Mammary epithelial cell (primary cell): ENCODE measurements at regions of chr2 and their contacts with region 1.

Region 1: DNA sequence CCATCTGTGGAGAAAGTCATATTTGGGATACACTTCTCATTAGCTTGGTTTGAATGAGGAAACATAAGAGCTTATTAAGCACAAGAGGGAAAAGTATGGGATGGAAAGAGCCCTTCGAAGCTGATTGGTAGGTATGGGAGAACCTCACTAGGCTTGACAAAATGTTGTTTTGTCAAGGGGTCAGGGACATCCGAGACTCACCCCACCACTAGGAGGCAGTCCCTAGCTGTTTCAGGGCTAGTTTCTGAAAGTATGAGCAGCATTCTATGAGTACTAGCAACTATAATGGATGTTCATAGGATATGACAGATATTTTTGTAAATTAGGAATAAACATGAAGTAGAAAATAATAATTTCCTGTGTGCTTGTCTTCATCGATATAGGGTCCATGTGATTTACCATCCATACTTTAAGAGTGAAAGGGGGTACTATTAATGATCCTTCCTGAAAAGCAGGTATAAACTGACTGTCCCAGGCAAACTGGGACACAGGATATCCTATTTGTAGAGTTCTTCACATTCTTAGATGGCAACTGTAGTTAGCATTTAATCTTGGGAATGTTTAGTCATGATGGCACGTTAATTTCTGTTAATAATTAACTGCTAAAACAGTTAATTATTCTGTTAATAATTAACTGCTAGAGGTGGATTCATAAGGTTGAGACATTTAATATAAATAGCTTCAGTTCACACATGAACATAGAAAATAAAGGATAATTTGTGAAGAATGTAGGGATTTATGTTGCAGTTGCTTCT is 28.4 kb downstream of the OTX1 start:
- DNase-seq: peak; percentile 42
- H3K4me3 ChIP-seq: no peak overlapping the region
- H3K27ac ChIP-seq: no peak overlapping the region
- H3K4me1 ChIP-seq: no peaks in the 10 kb centered on the region
- H3K27me3 ChIP-seq: no peaks in the 10 kb centered on the region
- CTCF ChIP-seq: peak; percentile 68 to 86

Region 2: DNA sequence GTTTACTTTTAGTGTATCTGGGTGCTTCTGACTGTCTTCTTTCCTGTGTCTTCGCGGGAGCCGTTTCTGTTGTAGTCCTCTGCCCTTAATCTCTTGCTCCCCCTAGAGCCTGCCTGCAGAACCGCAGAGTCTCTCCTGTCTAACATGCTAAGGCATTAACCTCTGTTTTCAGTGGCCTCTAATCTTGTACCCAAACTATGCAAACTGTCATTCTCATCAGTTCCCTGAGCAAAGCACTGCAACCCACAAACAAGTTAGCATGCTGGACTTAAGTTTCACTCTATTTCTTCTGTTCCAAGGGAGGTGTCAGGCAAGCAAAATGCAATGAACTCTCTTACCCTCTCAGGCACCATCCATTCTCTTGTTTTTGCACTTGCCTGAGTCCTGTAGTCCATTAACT is 110.0 kb after region 1 on chr2:
- CTCF ChIA-PET with region 1: no interaction called
- dilution Hi-C with region 1: no loop called
- in situ Hi-C with region 1: no loop called
- intact Hi-C with region 1: loop called (anchors 1 kb)
- DNase-seq: peak; percentile 41
- H3K4me3 ChIP-seq: no peak overlapping the region
- H3K27ac ChIP-seq: no peak overlapping the region
- H3K4me1 ChIP-seq: no peaks in the 10 kb centered on the region
- H3K27me3 ChIP-seq: no peaks in the 10 kb centered on the region
- CTCF ChIP-seq: peak; percentile 95 to 97

Region 3: GRCh38 chr2:63424329-63425078 is 345.5 kb after region 1 on chr2:
- CTCF ChIA-PET with region 1: no interaction called
- dilution Hi-C with region 1: no loop called
- in situ Hi-C with region 1: no loop called
- intact Hi-C with region 1: loop called (anchors 10 kb)
- DNase-seq: peak; percentile 38
- H3K4me3 ChIP-seq: no peak overlapping the region
- H3K27ac ChIP-seq: no peak overlapping the region
- H3K4me1 ChIP-seq: no peaks in the 10 kb centered on the region
- H3K27me3 ChIP-seq: no peaks in the 10 kb centered on the region
- CTCF ChIP-seq: peak; percentile 67 to 73

Region 4: DNA sequence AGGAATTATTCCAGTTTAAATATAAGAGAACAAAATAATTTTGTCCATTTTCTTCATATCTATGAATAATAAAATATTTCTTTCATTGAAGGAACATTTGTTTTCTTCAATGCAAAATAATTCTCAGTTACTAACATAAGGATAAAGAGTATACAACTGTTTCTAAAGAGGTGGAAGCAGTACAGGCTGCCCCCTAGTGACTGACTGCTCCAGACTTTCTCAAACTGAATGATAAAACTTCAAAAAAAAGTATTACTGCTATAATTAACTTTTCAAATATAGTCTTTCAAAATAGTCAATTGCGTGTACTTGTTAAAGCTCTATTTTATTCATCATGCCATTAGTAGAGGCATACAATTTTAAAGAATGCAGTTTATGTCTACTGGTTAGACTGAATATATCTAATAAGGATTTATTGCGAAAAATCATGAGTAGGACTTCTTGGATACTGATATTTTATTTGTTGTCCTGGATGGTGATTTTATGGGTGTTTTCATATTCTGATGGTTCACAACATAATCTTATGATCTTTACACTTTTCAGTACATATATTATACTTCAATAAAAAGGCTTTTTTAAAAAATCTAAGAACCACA is 409.2 kb after region 1 on chr2:
- CTCF ChIA-PET with region 1: no interaction called
- dilution Hi-C with region 1: no loop called
- in situ Hi-C with region 1: no loop called
- intact Hi-C with region 1: loop called (anchors 2 kb)
- DNase-seq: peak; percentile 6
- H3K4me3 ChIP-seq: no peak overlapping the region
- H3K27ac ChIP-seq: no peak overlapping the region
- H3K4me1 ChIP-seq: no peaks in the 10 kb centered on the region
- H3K27me3 ChIP-seq: no peaks in the 10 kb centered on the region
- CTCF ChIP-seq: peak; percentile 68 to 75

Region 5: GRCh38 chr2:63544017-63544627 is 465.1 kb after region 1 on chr2:
- CTCF ChIA-PET with region 1: interaction called, 4 read pairs
- dilution Hi-C with region 1: no loop called
- in situ Hi-C with region 1: no loop called
- intact Hi-C with region 1: loop called (anchors 10 kb)
- DNase-seq: no peak
- H3K4me3 ChIP-seq: no peak overlapping the region
- H3K27ac ChIP-seq: no peak overlapping the region
- H3K4me1 ChIP-seq: peaks cover 5% of the 10 kb centered on the region
- H3K27me3 ChIP-seq: no peaks in the 10 kb centered on the region
- CTCF ChIP-seq: peak; percentile 45 to 59